Posterior cingulate gyrus (tissue), 11 donors: ENCODE measurements at regions of chr16 and their contacts with region 1.

Region 1: GRCh38 chr16:73846356-73846755 is 450.3 kb upstream of the PSMD7 start:
- DNase-seq: peak in 4 of 10 donors; percentile 8 to 86 (median 26)

Region 2: GRCh38 chr16:73713778-73714495 is 132.4 kb before region 1 on chr16:
- intact Hi-C with region 1: loop called (anchors 10 kb)
- DNase-seq: peak in 7 of 10 donors; percentile 28 to 90 (median 68)

Region 3: DNA sequence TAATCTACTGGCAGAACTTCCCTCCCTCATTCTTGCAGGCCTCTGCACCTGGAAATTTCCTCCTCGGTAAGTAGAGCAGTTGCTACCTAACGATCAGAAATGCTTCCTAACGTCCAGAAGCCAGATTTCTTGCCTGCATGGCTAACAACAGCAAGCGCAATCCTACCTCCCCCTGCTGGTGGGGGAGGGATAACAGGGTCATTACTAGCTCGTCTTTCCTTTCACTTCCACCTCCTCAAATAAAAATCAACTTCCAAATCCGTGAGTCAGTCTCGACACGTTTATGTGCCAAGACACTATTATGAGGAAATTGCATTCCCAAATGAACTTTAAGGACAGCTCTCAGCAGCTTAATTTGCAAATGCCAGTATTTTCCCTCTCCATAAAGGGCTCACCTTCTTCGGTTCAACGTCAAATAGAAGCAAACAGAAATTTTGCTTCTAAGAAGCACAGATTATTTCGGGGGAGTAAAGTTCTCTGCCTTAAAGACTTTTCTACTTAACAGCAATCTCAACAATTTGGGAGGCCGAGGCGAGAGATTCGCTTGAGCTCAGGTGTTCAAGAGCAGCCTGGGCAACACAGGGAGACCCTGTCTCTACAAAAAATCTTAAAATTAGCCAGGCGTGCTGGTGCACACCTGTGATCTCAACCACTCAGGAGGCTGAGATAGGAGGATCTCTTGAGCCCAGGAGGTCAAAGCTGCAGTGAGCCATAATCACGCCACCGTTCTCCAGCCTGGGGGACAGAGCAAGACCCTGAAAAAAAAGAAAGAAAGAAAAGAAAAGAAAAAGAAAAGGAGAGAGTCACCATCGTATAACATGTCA is 261.7 kb after region 1 on chr16:
- intact Hi-C with region 1: no loop called
- DNase-seq: peak in 1 of 10 donors; percentile 19